ENCODE measurements at regions of chr1 and their contacts with region 1.

Region 1: GRCh38 chr1:95043141-95043980 is 29.4 kb downstream of the ALG14 start:
- DNase-seq: peak; percentile 81
- H3K4me3 Mint-ChIP-seq: no peak overlapping the region
- H3K27ac Mint-ChIP-seq: no peak overlapping the region
- H3K4me1 Mint-ChIP-seq: peaks cover 10% of the 10 kb centered on the region
- H3K27me3 Mint-ChIP-seq: no peaks in the 10 kb centered on the region
- CTCF ChIP-seq: peak; percentile 98

Region 2: GRCh38 chr1:94514095-94514727 is 529.1 kb before region 1 on chr1:
- CTCF ChIA-PET with region 1: no interaction called
- intact Hi-C with region 1: loop called (anchors 5 kb)
- DNase-seq: peak; percentile 45
- H3K4me3 Mint-ChIP-seq: no peak overlapping the region
- H3K27ac Mint-ChIP-seq: no peak overlapping the region
- H3K4me1 Mint-ChIP-seq: peaks cover 5% of the 10 kb centered on the region
- H3K27me3 Mint-ChIP-seq: no peaks in the 10 kb centered on the region
- CTCF ChIP-seq: peak; percentile 63

Region 3: DNA sequence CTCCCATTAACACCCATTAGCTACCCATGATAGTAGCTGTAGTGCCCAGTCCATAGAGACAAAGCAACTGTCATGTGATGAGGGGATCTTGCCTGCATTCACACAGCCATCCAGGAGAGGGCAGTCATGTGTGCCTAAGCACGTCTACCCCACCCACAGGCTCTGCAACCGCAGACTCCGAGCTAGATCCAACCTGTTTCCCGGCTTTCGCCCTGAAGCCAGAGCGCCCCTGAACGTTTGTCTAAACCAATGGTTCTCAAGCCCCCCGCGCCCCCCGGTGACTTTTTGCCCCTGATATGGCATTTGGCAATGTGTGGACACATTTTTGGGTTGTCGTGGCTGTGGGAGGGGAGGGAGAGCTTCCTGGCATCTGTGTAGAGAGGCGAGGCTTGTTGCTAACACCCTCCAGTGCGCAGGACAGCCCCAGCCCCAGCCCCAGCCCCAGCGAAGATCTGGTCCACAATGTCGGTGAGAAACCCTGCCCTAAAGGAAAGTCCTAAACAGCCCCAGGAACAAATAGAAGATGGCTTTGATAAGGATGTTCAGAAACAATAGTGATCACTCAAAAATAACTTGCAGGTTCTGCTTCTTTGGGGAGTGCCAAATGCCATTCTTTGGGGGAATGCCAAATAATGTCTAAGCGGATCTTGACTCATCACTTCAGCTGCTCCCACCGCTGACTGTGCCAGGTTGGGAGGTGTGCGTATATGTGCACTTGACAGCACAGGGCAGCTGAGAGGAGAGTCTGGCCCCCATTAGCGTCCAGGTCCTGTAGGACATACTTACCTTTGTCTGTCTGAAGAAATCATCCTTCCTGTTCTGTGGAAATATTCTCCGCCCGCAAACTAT is 188.7 kb before region 1 on chr1:
- CTCF ChIA-PET with region 1: interaction called, 111 read pairs
- intact Hi-C with region 1: loop called (anchors 1 kb)
- DNase-seq: peak; percentile 87
- H3K4me3 Mint-ChIP-seq: no peak overlapping the region
- H3K27ac Mint-ChIP-seq: no peak overlapping the region
- H3K4me1 Mint-ChIP-seq: no peaks in the 10 kb centered on the region
- H3K27me3 Mint-ChIP-seq: no peaks in the 10 kb centered on the region
- CTCF ChIP-seq: peak; percentile 91

Region 4: DNA sequence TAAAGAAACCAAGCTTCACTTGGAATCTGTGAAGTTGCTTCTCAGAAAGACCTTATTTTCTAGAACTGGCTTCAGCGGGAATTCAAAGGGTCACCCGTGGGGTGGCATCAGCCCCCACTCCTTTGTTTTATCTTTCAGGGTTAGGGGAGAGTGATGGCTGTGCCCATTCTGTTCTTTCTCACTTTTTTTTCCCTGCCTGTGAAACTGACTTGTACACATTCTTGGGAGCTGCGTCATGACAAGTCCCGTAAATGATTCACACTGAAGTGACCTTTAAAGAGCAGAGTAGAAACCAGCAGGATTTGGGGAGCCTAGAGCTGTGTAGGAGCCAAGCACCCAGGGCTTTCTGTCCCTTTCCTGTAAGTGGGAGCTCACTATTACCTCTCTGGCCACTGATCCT is 179.4 kb before region 1 on chr1:
- CTCF ChIA-PET with region 1: interaction called, 15 read pairs
- intact Hi-C with region 1: no loop called
- DNase-seq: peak; percentile 64
- H3K4me3 Mint-ChIP-seq: peak overlapping the region; percentile 45
- H3K27ac Mint-ChIP-seq: peak overlapping the region; percentile 88
- H3K4me1 Mint-ChIP-seq: peaks cover 50% of the 10 kb centered on the region
- H3K27me3 Mint-ChIP-seq: no peaks in the 10 kb centered on the region
- CTCF ChIP-seq: no peak

Region 5: GRCh38 chr1:94898491-94899385 is 144.6 kb before region 1 on chr1:
- CTCF ChIA-PET with region 1: no interaction called
- intact Hi-C with region 1: loop called (anchors 5 kb)
- DNase-seq: no peak
- H3K4me3 Mint-ChIP-seq: no peak overlapping the region
- H3K27ac Mint-ChIP-seq: no peak overlapping the region
- H3K4me1 Mint-ChIP-seq: no peaks in the 10 kb centered on the region
- H3K27me3 Mint-ChIP-seq: no peaks in the 10 kb centered on the region
- CTCF ChIP-seq: no peak

Region 6: DNA sequence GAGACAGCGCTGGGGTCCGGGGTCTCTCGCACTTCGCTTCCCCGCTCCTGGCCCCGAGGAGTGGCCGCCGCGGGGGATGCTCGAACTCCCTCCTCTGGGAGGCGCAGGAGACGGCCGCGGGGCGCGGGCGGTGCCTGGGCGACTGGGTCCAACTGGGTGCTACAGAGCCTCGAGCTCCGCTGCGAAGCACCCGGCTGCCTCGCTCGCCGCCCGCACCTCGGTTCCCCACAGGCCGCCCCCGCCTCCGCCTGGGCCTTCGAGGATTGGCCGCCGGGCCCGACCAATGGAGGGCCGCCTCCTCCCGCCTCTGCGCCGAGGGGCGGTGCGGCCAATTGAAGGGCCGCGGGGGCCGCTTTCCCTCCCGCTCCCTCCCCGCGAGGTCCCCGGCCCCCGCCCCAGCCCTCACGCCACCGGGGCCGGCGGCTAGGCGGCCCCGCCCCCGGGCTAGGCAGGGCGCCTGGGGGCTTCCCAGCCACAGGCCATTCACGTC is 116.4 kb before region 1 on chr1 and contains the start of gene CNN3:
- CTCF ChIA-PET with region 1: interaction called, 9 read pairs
- intact Hi-C with region 1: loop called (anchors 1 kb)
- DNase-seq: peak; percentile 95
- H3K4me3 Mint-ChIP-seq: peak within 1 kb of the TSS; percentile 98
- H3K27ac Mint-ChIP-seq: peak within 1 kb of the TSS; percentile 86
- H3K4me1 Mint-ChIP-seq: peaks cover 51% of the 10 kb centered on the region
- H3K27me3 Mint-ChIP-seq: no peaks in the 10 kb centered on the region
- CTCF ChIP-seq: no peak
- total RNA-seq, gene CNN3: 83.4 and 140 TPM in 2 replicates

Region 7: DNA sequence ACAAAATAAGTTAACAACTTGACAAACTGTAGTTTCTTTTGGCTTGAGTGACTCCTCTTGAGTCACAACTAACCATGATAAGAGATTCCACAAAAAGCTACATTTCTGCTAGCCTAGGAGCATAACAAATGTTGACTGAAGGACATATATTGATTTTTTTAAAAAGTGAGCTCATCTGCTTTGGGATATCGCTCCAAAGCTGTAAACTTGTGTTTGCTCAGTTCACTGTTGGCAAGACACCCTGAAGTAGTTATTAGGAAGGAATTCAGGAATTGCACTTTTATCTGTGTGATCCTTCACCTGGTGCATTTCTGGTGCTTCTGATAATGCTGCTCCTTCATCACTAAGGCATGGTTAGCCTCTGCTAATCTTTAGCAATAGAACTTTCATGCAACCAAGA is 214.4 kb after region 1 on chr1:
- CTCF ChIA-PET with region 1: interaction called, 11 read pairs
- intact Hi-C with region 1: no loop called
- DNase-seq: peak; percentile 31
- H3K4me3 Mint-ChIP-seq: no peak overlapping the region
- H3K27ac Mint-ChIP-seq: peak overlapping the region; percentile 68
- H3K4me1 Mint-ChIP-seq: peaks cover 38% of the 10 kb centered on the region
- H3K27me3 Mint-ChIP-seq: no peaks in the 10 kb centered on the region
- CTCF ChIP-seq: no peak